PC-9 (cell line): ENCODE measurements at regions of chr13 and their contacts with region 1.

Region 1: GRCh38 chr13:38763439-38764381 is 76.8 kb downstream of the FREM2 start:
- DNase-seq: peak in 1 of 2 experiments; percentile 38
- H3K4me3 ChIP-seq: no peak overlapping the region
- H3K27ac ChIP-seq: no peak overlapping the region
- H3K4me1 ChIP-seq: 0 out of 2 replicates have a peak, but pooled peaks cover 7% of the 10 kb centered on the region
- H3K27me3 ChIP-seq: no peaks in the 10 kb centered on the region
- CTCF ChIP-seq: peak; percentile 65

Region 2: DNA sequence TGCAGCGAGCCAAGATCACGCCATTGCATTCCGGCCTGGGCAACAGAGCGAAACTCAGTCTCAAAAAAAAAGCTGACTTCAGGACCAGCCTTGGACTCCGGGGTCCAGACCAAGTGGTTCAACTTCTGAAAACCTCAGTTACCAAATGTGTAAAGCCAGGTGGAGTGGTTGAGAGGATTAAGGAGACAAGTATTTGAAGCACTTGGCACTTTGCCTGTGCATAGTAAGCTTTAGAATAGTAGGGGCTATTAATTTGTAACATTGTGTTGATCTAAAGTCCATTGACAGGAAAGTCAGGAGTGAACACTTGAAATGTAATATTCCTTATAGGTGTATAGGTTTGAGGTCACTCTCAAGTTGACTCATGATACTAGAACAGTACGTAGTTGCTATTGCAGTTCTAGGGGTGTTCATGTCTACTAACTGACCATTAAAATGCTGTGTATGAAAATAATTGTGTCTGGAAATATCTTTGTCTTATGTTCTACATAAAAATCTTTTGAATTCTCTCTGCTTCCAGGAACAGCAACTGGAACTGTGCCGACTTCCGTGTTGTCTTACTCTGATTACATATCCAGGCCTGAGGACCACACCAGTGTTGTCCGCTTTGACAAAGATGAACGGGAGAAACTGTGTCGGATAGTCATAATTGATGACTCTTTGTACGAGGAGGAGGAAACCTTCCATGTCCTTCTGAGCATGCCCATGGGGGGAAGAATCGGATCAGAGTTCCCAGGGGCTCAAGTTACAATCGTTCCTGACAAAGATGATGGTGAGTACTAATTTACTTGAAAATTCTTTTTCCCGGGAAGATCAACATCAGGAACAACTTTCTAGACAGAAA is 20.5 kb after region 1 on chr13:
- CTCF ChIA-PET with region 1: no interaction called
- POLR2A ChIA-PET with region 1: no interaction called
- intact Hi-C with region 1: no loop called
- DNase-seq: no peak
- H3K4me3 ChIP-seq: no peak overlapping the region
- H3K27ac ChIP-seq: no peak overlapping the region
- H3K4me1 ChIP-seq: no peaks in the 10 kb centered on the region
- H3K27me3 ChIP-seq: no peaks in the 10 kb centered on the region
- CTCF ChIP-seq: no peak

Region 3: GRCh38 chr13:39023790-39024189 is 260.1 kb after region 1 on chr13:
- CTCF ChIA-PET with region 1: no interaction called
- POLR2A ChIA-PET with region 1: no interaction called
- intact Hi-C with region 1: no loop called
- DNase-seq: peak; percentile 17 to 82
- H3K4me3 ChIP-seq: no peak overlapping the region
- H3K27ac ChIP-seq: peak overlapping the region; percentile 60
- H3K4me1 ChIP-seq: peaks cover 27% of the 10 kb centered on the region
- H3K27me3 ChIP-seq: no peaks in the 10 kb centered on the region
- CTCF ChIP-seq: no peak

Region 4: DNA sequence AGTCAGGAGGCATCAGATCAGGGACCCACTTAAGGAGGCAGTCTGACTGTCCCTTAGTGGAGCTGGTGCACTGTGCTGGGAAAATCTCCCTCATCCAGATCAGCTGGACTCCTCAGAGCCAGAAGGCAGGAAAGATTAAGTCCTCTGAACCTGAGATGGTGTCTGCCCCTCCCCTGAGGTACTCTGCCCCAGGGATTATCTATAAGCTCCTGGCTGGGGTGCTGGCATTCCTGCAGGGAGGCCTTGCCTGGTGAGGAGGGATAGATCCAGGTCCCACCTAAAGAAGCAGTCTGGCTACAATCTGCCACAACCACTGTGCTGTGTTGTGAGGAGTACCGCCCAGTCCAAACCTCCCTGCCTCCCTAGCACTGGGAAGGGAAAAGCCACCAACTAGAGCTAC is 355.7 kb after region 1 on chr13:
- CTCF ChIA-PET with region 1: no interaction called
- POLR2A ChIA-PET with region 1: interaction called, 11 read pairs
- intact Hi-C with region 1: no loop called
- DNase-seq: no peak
- H3K4me3 ChIP-seq: no peak overlapping the region
- H3K27ac ChIP-seq: no peak overlapping the region
- H3K4me1 ChIP-seq: no peaks in the 10 kb centered on the region
- H3K27me3 ChIP-seq: no peaks in the 10 kb centered on the region
- CTCF ChIP-seq: no peak